Endothelial cell of umbilical vein (primary cell): ENCODE measurements at regions of chr19 and their contacts with region 1.

Region 1: GRCh38 chr19:10717356-10718204 is at the start of gene DNM2:
- DNase-seq: peak; percentile 100
- H3K4me3 ChIP-seq: peak within 1 kb of the TSS; percentile 25 to 82 (median 49)
- H3K27ac ChIP-seq: peak within 1 kb of the TSS; percentile 74
- H3K4me1 ChIP-seq: peaks cover 13% of the 10 kb centered on the region
- H3K27me3 ChIP-seq: no peaks in the 10 kb centered on the region
- CTCF ChIP-seq: peak; percentile 77 to 88
- POLR2A ChIP-seq: peak; percentile 60
- total RNA-seq, gene DNM2: 164 and 175 TPM in 2 replicates

Region 2: GRCh38 chr19:10695401-10696398 is 21.9 kb before region 1 on chr19:
- CTCF ChIA-PET with region 1: interaction called, 32 read pairs
- POLR2A ChIA-PET with region 1: no interaction called
- dilution Hi-C with region 1: no loop called
- intact Hi-C with region 1: no loop called
- DNase-seq: peak; percentile 98
- H3K4me3 ChIP-seq: peak overlapping the region; percentile 13 to 45 (median 20)
- H3K27ac ChIP-seq: no peak overlapping the region
- H3K4me1 ChIP-seq: peaks cover 7% of the 10 kb centered on the region
- H3K27me3 ChIP-seq: no peaks in the 10 kb centered on the region
- CTCF ChIP-seq: no peak
- POLR2A ChIP-seq: no peak

Region 3: GRCh38 chr19:10751109-10751953 is 33.8 kb after region 1 on chr19:
- CTCF ChIA-PET with region 1: interaction called, 9 read pairs
- POLR2A ChIA-PET with region 1: no interaction called
- dilution Hi-C with region 1: no loop called
- intact Hi-C with region 1: loop called (anchors 1 kb)
- DNase-seq: peak; percentile 46
- H3K4me3 ChIP-seq: no peak overlapping the region
- H3K27ac ChIP-seq: peak overlapping the region; percentile 55
- H3K4me1 ChIP-seq: peaks cover 27% of the 10 kb centered on the region
- H3K27me3 ChIP-seq: no peaks in the 10 kb centered on the region
- CTCF ChIP-seq: no peak
- POLR2A ChIP-seq: no peak

Region 4: DNA sequence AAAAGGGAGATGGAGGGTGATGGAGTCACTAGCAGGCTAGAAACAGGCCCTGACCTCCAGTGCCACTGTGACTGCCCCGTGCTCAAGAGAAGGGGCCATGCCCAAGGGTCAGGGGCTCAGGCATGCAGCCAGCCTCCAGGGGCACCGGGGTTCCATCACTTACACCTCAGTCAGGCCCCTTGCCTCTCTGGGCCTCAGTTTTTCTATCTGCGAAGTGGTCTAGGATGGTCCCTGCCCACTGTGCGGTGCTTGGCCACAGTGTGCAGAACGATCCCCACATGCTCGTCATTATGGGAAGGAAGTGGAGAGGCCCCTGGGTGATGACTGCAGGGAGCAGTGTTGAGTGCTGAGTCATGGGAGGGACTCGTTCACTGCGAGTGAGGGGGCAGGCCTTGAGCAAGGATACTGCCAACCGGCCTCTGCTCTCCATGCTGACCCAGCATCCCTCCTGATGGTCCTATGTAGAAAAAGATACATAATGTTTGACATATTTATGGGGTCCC is 95.4 kb after region 1 on chr19:
- CTCF ChIA-PET with region 1: interaction called, 3 read pairs
- POLR2A ChIA-PET with region 1: no interaction called
- dilution Hi-C with region 1: no loop called
- intact Hi-C with region 1: loop called (anchors 1 kb)
- DNase-seq: peak; percentile 80
- H3K4me3 ChIP-seq: no peak overlapping the region
- H3K27ac ChIP-seq: peak overlapping the region; percentile 72
- H3K4me1 ChIP-seq: peaks cover 8% of the 10 kb centered on the region
- H3K27me3 ChIP-seq: no peaks in the 10 kb centered on the region
- CTCF ChIP-seq: no peak
- POLR2A ChIP-seq: peak; percentile 21

Region 5: DNA sequence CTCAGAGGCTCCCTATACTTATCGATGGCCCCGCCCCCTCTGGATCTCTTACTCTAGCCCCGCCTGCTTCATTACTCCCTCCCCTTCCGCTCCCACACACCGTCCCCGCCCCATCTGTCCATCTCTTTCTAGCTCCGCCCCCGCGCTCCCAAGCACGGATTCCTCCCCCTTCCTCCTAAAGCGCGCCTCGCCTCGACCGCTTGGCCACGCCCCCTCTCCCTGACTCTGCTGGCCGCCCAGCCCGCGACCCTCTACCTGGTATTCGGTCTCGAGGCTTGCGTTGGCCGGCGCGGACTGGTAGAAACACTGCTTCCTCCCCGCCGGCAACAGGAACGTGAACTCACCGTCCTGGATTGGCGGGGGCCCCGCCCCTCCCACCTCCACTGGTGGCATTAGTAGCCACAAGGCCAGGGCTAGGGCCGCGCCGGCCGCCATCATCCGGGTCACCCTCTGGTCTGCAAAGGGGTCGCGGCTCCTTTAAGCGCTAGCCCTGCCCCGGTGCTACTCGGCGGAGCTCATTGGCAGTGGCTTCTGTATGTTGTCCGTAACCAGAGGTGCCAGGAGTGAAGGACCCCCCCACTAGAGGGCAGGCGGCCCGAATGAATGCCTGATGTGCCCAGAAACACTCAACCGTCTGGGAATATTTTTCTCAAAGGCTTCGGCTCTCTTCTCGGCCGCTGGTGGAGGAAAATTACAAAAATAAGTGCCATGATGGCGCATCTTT is 118.3 kb after region 1 on chr19 and contains the start of gene TMED1:
- CTCF ChIA-PET with region 1: interaction called, 30 read pairs
- POLR2A ChIA-PET with region 1: no interaction called
- dilution Hi-C with region 1: no loop called
- intact Hi-C with region 1: loop called (anchors 1 kb)
- DNase-seq: peak; percentile 99
- H3K4me3 ChIP-seq: peak within 1 kb of the TSS; percentile 17 to 71 (median 48)
- H3K27ac ChIP-seq: peak within 1 kb of the TSS; percentile 97
- H3K4me1 ChIP-seq: peaks cover 9% of the 10 kb centered on the region
- H3K27me3 ChIP-seq: no peaks in the 10 kb centered on the region
- CTCF ChIP-seq: peak in 1 of 2 donors; percentile 8
- POLR2A ChIP-seq: no peak
- total RNA-seq, gene TMED1: 31.2 and 33.9 TPM in 2 replicates

Region 6: GRCh38 chr19:10870955-10871603 is 153.5 kb after region 1 on chr19 and contains the start of gene CARM1:
- CTCF ChIA-PET with region 1: interaction called, 100 read pairs
- POLR2A ChIA-PET with region 1: interaction called, 3 read pairs
- dilution Hi-C with region 1: no loop called
- intact Hi-C with region 1: no loop called
- DNase-seq: peak; percentile 99
- H3K4me3 ChIP-seq: peak within 1 kb of the TSS; percentile 81 to 100 (median 99)
- H3K27ac ChIP-seq: peak within 1 kb of the TSS; percentile 52
- H3K4me1 ChIP-seq: peaks cover 12% of the 10 kb centered on the region
- H3K27me3 ChIP-seq: no peaks in the 10 kb centered on the region
- CTCF ChIP-seq: peak; percentile 65 to 66
- POLR2A ChIP-seq: no peak
- total RNA-seq, gene CARM1: 70.8 and 72.2 TPM in 2 replicates